HCT116 (cell line): ENCODE measurements at regions of chr3 and their contacts with region 1.

Region 1: DNA sequence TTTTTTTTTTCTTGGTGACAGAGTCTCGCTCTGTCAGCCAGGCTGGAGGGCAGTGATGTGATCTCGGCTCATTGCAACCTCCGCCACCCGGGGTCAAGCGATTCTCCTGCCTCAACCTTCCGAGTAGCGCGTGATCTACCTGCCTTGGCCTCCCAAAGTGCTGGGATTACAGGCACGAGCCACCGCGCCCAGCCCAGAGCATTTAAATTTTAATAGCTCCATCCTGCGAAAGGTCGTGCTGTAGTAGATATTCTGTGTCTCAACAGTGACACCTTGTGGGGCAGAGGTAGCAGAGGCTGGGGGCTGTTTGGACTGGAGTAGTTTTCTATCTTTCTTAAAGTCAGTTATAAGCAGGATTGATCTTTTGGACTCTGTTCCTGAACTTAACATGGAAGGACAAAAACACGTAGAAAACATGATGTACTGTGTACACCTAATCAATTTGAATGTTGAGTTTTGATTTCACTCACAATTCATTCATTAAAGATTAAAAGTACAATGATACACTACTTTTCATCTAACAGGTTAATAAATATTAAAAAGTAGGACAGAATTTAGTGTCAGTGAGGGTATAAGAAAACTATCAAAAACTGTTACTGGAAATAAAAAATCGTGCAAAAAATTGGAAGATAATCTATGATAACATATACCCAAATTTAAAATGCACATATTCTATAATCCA is 11.0 kb upstream of the PDCD6IP start:
- DNase-seq: peak; percentile 60
- ATAC-seq: peak; percentile 98
- H3K4me3 ChIP-seq: peak overlapping the region in 1 of 2 experiments; percentile 17; a peak in 1 of 4 replicates
- H3K27ac ChIP-seq: no peak overlapping the region
- H3K4me1 ChIP-seq: peaks cover 0 to 17% of the 10 kb centered on the region in 2 experiments; a peak in 2 of 4 replicates
- H3K27me3 ChIP-seq: no peaks in the 10 kb centered on the region
- CTCF ChIP-seq: peak; percentile 83 to 84 (median 84)
- POLR2A ChIP-seq: no peak
- RAD21 ChIP-seq: peak; percentile 88

Region 2: GRCh38 chr3:32947789-32948238 is 839.7 kb before region 1 on chr3:
- CTCF ChIA-PET with region 1: interaction called, 12 read pairs
- POLR2A ChIA-PET with region 1: no interaction called
- RAD21 ChIA-PET with region 1: interaction called, 3 read pairs
- intact Hi-C with region 1: loop called (anchors 2 kb)
- DNase-seq: peak; percentile 88
- ATAC-seq: peak; percentile 97
- H3K4me3 ChIP-seq: no peak overlapping the region
- H3K27ac ChIP-seq: no peak overlapping the region
- H3K4me1 ChIP-seq: peaks cover 0 to 14% of the 10 kb centered on the region in 2 experiments; a peak in 2 of 4 replicates
- H3K27me3 ChIP-seq: no peaks in the 10 kb centered on the region
- CTCF ChIP-seq: peak; percentile 79 to 88 (median 83)
- POLR2A ChIP-seq: no peak
- RAD21 ChIP-seq: peak; percentile 96

Region 3: GRCh38 chr3:33131331-33132018 is 656.0 kb before region 1 on chr3:
- CTCF ChIA-PET with region 1: interaction called, 33 read pairs
- POLR2A ChIA-PET with region 1: no interaction called
- RAD21 ChIA-PET with region 1: interaction called, 3 to 9 read pairs
- intact Hi-C with region 1: loop called (anchors 1 kb)
- DNase-seq: peak; percentile 44
- ATAC-seq: peak; percentile 85
- H3K4me3 ChIP-seq: no peak overlapping the region
- H3K27ac ChIP-seq: no peak overlapping the region
- H3K4me1 ChIP-seq: no peaks in the 10 kb centered on the region
- H3K27me3 ChIP-seq: no peaks in the 10 kb centered on the region
- CTCF ChIP-seq: peak; percentile 62 to 83 (median 77)
- POLR2A ChIP-seq: no peak
- RAD21 ChIP-seq: peak; percentile 92

Region 4: GRCh38 chr3:33372218-33373081 is 415.0 kb before region 1 on chr3:
- CTCF ChIA-PET with region 1: interaction called, 18 read pairs
- POLR2A ChIA-PET with region 1: no interaction called
- RAD21 ChIA-PET with region 1: interaction called in 1 of 2 experiments, 3 read pairs
- intact Hi-C with region 1: no loop called
- DNase-seq: peak; percentile 70
- ATAC-seq: peak; percentile 91
- H3K4me3 ChIP-seq: peak overlapping the region in 1 of 2 experiments; percentile 39; a peak in 2 of 4 replicates
- H3K27ac ChIP-seq: peak overlapping the region; percentile 6; the same call in 1 of the 2 replicates
- H3K4me1 ChIP-seq: peaks cover 4 to 15% of the 10 kb centered on the region in 2 experiments; a peak in 3 of 4 replicates
- H3K27me3 ChIP-seq: no peaks in the 10 kb centered on the region
- CTCF ChIP-seq: peak; percentile 88 to 98 (median 89)
- POLR2A ChIP-seq: no peak
- RAD21 ChIP-seq: peak; percentile 94

Region 5: GRCh38 chr3:33636125-33636850 is 151.2 kb before region 1 on chr3:
- CTCF ChIA-PET with region 1: interaction called, 22 read pairs
- POLR2A ChIA-PET with region 1: no interaction called
- RAD21 ChIA-PET with region 1: interaction called in 1 of 2 experiments, 4 read pairs
- intact Hi-C with region 1: loop called (anchors 1 kb)
- DNase-seq: peak; percentile 44
- ATAC-seq: peak; percentile 61
- H3K4me3 ChIP-seq: no peak overlapping the region
- H3K27ac ChIP-seq: no peak overlapping the region
- H3K4me1 ChIP-seq: no peaks in the 10 kb centered on the region
- H3K27me3 ChIP-seq: no peaks in the 10 kb centered on the region
- CTCF ChIP-seq: peak; percentile 49 to 71 (median 50); a peak in 5 of 6 replicates
- POLR2A ChIP-seq: no peak
- RAD21 ChIP-seq: peak; percentile 76

Region 6: DNA sequence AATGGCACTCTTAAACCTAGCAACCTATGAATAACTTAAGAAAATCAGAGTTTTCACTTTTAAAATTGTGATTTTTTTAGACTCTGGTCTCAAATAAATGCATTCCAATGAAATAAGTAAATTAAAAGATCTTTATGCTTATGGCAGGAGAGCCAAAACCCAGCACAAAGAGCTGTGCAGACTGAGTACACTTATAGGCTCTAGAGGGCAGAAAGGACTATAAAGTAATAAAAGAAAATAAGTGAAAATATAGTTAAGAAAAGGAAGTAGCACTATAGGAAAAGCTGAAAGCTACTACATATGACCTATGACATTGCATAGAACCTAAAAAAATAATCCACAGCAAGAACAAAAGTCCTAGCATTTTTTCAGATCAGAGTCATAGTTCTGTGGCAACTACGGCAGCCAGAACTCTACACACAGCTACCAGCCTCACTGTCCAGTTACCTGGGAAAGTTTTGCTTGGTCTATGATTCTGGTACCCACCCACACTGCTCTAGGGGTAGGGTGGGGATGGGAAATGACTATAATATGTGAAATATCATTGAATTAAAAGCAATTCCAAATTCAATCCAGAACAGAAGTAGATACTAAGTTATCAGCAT is 100.0 kb before region 1 on chr3:
- CTCF ChIA-PET with region 1: no interaction called
- POLR2A ChIA-PET with region 1: no interaction called
- RAD21 ChIA-PET with region 1: no interaction called
- intact Hi-C with region 1: no loop called
- DNase-seq: no peak
- ATAC-seq: no peak
- H3K4me3 ChIP-seq: no peak overlapping the region
- H3K27ac ChIP-seq: no peak overlapping the region
- H3K4me1 ChIP-seq: no peaks in the 10 kb centered on the region
- H3K27me3 ChIP-seq: no peaks in the 10 kb centered on the region
- CTCF ChIP-seq: no peak
- POLR2A ChIP-seq: no peak
- RAD21 ChIP-seq: no peak

Region 7: DNA sequence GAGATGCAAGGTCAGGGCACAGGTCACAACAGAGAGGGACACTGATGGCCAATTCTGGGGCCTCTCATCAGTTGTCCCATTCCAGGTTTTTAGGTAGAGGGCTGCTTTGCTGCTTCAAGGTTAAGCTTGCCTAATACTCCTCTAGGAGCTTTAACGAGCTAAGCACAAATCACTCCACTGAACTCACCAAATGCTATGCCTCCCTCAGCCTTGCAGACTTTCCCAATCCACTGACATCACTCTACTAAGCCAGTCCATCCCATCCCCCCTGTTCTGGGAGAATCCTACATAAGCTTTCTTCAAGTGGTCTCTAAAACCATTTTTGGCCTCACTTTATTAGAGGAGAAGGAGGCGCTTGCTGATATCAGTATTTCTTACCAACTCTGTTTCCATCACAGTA is 13.8 kb before region 1 on chr3:
- CTCF ChIA-PET with region 1: interaction called, 32 read pairs
- POLR2A ChIA-PET with region 1: no interaction called
- RAD21 ChIA-PET with region 1: interaction called in 1 of 2 experiments, 3 read pairs
- intact Hi-C with region 1: no loop called
- DNase-seq: no peak
- ATAC-seq: no peak
- H3K4me3 ChIP-seq: no peak overlapping the region
- H3K27ac ChIP-seq: no peak overlapping the region
- H3K4me1 ChIP-seq: no peaks in the 10 kb centered on the region
- H3K27me3 ChIP-seq: no peaks in the 10 kb centered on the region
- CTCF ChIP-seq: no peak
- POLR2A ChIP-seq: no peak
- RAD21 ChIP-seq: no peak

Region 8: DNA sequence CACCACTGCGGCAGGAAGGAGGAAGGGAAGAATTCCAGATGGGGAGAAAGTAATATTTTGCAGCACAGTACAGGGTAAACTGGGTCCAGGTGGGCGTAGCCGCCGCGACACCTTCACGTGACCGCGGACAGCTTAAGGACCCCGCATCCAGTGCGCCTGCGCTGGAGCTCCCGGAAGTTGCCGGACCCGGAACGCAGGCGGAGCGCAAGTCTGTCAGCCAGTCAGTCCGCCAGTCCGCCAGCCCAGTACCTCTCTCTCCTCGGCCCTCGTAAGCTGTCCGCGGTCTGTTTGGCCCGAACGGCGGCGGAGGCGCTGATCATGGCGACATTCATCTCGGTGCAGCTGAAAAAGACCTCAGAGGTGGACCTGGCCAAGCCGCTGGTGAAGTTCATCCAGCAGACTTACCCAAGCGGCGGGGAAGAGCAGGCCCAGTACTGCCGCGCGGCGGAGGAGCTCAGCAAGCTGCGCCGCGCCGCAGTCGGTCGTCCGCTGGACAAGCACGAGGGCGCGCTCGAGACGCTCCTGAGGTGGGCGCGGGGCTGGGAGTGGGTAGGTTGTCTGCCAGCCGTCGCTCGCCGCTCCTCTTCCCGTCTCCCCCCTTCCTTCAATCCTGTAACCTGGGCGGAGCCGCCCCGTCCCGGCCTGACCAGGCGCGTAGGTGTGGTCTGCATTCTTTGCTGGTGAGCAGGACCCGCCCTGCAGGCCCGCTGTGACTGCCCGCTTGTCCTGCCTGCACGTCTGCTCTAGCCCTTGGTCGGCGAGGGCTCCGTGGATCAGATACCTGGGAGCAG is 11.1 kb after region 1 on chr3 and contains the start of gene PDCD6IP:
- CTCF ChIA-PET with region 1: interaction called, 11 read pairs
- POLR2A ChIA-PET with region 1: interaction called, 5 read pairs
- RAD21 ChIA-PET with region 1: no interaction called
- intact Hi-C with region 1: no loop called
- DNase-seq: peak; percentile 87
- ATAC-seq: peak; percentile 93
- H3K4me3 ChIP-seq: peak within 1 kb of the TSS; percentile 81 to 96
- H3K27ac ChIP-seq: peak within 1 kb of the TSS; percentile 94
- H3K4me1 ChIP-seq: peaks cover 3 to 20% of the 10 kb centered on the region in 2 experiments; a peak in 3 of 4 replicates
- H3K27me3 ChIP-seq: no peaks in the 10 kb centered on the region
- CTCF ChIP-seq: no peak
- POLR2A ChIP-seq: peak; percentile 63
- RAD21 ChIP-seq: no peak
- total RNA-seq, gene PDCD6IP: 241 TPM